SK-N-SH (cell line): ENCODE measurements at regions of chr9 and their contacts with region 1.

Region 1: GRCh38 chr9:34437006-34437925 is 21.1 kb downstream of the FAM219A start:
- DNase-seq: peak; percentile 74
- H3K4me3 ChIP-seq: no peak overlapping the region
- H3K27ac ChIP-seq: peak overlapping the region in 1 of 2 experiments; percentile 59; a peak in 2 of 4 replicates
- H3K4me1 ChIP-seq: peaks cover 12 to 21% of the 10 kb centered on the region in 2 experiments; a peak in 3 of 4 replicates
- H3K27me3 ChIP-seq: no peaks in the 10 kb centered on the region
- CTCF ChIP-seq: peak; percentile 92
- EP300 ChIP-seq: no peak
- RAD21 ChIP-seq: peak; percentile 94

Region 2: GRCh38 chr9:34126207-34127034 is 310.8 kb before region 1 on chr9 and contains the start of gene DCAF12:
- CTCF ChIA-PET with region 1: no interaction called
- POLR2A ChIA-PET with region 1: no interaction called
- DNase-seq: peak; percentile 97
- H3K4me3 ChIP-seq: peak within 1 kb of the TSS; percentile 93 to 94
- H3K27ac ChIP-seq: peak within 1 kb of the TSS; percentile 85 to 94
- H3K4me1 ChIP-seq: peaks cover 7 to 23% of the 10 kb centered on the region in 2 experiments; a peak in 3 of 4 replicates
- H3K27me3 ChIP-seq: no peaks in the 10 kb centered on the region
- CTCF ChIP-seq: 0 out of 2 replicates have a peak, but pooled peaks have one; percentile 5
- EP300 ChIP-seq: peak in 1 of 2 experiments; percentile 26; a peak in 1 of 4 replicates
- RAD21 ChIP-seq: no peak
- polyA plus RNA-seq, gene DCAF12: 20.8 and 25.7 TPM in 2 replicates

Region 3: GRCh38 chr9:34522971-34523797 is 85.9 kb after region 1 on chr9 and contains the start of gene ENHO:
- CTCF ChIA-PET with region 1: interaction called, 10 read pairs
- POLR2A ChIA-PET with region 1: no interaction called
- DNase-seq: peak; percentile 99
- H3K4me3 ChIP-seq: peak within 1 kb of the TSS; percentile 50 to 53
- H3K27ac ChIP-seq: peak within 1 kb of the TSS in 1 of 2 experiments; percentile 36; a peak in 1 of 4 replicates
- H3K4me1 ChIP-seq: peaks cover 0 to 15% of the 10 kb centered on the region in 2 experiments; a peak in 1 of 4 replicates
- H3K27me3 ChIP-seq: no peaks in the 10 kb centered on the region
- CTCF ChIP-seq: no peak
- EP300 ChIP-seq: no peak
- RAD21 ChIP-seq: no peak
- polyA plus RNA-seq, gene ENHO: 1.2 and 1.5 TPM in 2 replicates